ENCODE measurements at regions of chr6 and their contacts with region 1.

Region 1: GRCh38 chr6:143427109-143427817 is 23.2 kb downstream of the ADAT2 start:
- DNase-seq: peak; percentile 79
- H3K4me3 ChIP-seq: peak overlapping the region in 1 of 2 experiments; percentile 51; a peak in 1 of 4 replicates
- H3K27ac ChIP-seq: no peak overlapping the region
- H3K4me1 ChIP-seq: no peaks in the 10 kb centered on the region
- H3K27me3 ChIP-seq: no peaks in the 10 kb centered on the region
- CTCF ChIP-seq: peak; percentile 96
- EP300 ChIP-seq: no peak
- RAD21 ChIP-seq: peak; percentile 99

Region 2: DNA sequence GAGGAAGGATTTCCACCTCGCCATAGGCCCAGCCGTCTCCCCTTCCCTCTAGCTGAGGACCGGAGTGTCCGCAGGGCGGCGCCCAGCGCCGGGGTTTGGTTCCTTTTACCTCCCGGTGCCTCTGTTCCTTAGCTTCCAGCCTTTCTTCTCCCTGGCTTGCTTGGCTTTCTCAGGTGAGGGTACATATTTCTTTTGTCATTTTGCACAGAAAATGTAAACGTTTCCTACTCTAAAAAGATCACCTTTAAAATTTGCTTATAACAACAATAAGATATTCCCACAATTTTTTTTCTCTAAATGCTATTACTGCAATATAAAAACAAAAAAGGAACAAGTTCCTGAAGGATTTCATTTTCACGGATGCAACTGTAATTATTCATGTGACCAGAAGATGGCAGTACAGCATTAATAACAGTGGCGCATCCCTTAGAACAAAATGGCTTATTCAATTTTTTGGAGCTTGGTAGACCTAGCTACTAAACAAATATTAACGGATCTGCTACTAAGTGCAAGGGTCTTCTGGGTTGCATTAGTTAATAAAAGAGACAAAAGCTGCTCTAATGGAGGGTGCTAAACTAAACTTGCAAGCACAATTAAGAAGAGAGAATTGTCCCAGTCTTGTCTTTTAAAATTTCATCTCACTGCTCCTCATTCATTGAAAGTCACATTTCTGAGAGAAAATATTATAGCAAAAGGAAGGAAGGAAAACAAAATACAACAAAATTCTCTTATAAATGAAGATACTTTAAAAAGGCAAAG is 952.6 kb before region 1 on chr6:
- CTCF ChIA-PET with region 1: interaction called, 55 read pairs
- POLR2A ChIA-PET with region 1: no interaction called
- DNase-seq: peak; percentile 47
- H3K4me3 ChIP-seq: peak overlapping the region; percentile 12 to 37; a peak in 2 of 4 replicates
- H3K27ac ChIP-seq: peak overlapping the region; percentile 19 to 66; a peak in 3 of 4 replicates
- H3K4me1 ChIP-seq: peaks cover 0 to 2% of the 10 kb centered on the region in 2 experiments; a peak in 2 of 4 replicates
- H3K27me3 ChIP-seq: no peaks in the 10 kb centered on the region
- CTCF ChIP-seq: peak; percentile 76
- EP300 ChIP-seq: no peak
- RAD21 ChIP-seq: peak; percentile 90

Region 3: DNA sequence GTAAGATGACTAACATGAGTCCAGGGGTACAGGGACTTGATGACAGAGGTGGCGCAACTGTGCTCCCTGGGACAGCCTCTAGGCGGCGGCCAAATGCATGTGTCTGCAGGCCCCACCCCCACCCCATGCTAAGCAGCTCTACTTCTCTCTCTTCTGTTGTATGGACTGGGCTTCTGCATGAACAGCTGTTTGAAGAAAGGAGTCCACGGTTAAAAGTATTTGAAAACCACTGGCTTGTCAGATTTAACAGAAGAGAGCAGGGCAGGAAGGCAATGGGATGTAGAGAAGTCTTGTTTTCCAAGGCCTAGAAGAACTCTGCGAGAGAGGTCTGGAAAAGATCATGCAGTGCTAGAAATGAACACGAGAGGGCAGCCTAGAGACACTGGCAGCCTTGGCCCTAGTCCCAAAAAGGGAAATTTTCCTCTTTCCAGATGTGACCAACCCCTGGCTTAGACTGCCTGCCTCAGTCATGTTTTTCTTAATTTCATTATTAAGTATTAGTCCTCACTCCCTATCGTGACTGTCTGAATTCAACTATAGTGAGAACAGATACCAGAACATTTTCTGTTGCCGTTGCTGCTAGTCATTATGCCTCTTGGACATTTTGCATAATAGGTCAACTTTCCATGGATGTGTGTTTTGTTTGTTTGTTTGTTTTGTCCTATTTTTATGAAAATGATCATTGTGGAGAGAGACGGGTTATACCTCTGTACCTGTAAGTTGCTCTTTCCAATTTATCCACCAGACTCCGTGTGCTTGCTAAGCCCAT is 860.5 kb before region 1 on chr6:
- CTCF ChIA-PET with region 1: interaction called, 21 read pairs
- POLR2A ChIA-PET with region 1: no interaction called
- DNase-seq: peak; percentile 66
- H3K4me3 ChIP-seq: peak overlapping the region in 1 of 2 experiments; percentile 31; a peak in 1 of 4 replicates
- H3K27ac ChIP-seq: peak overlapping the region in 1 of 2 experiments; percentile 45; a peak in 2 of 4 replicates
- H3K4me1 ChIP-seq: peaks cover 0 to 23% of the 10 kb centered on the region in 2 experiments; a peak in 3 of 4 replicates
- H3K27me3 ChIP-seq: no peaks in the 10 kb centered on the region
- CTCF ChIP-seq: peak; percentile 84
- EP300 ChIP-seq: no peak
- RAD21 ChIP-seq: peak; percentile 83

Region 4: DNA sequence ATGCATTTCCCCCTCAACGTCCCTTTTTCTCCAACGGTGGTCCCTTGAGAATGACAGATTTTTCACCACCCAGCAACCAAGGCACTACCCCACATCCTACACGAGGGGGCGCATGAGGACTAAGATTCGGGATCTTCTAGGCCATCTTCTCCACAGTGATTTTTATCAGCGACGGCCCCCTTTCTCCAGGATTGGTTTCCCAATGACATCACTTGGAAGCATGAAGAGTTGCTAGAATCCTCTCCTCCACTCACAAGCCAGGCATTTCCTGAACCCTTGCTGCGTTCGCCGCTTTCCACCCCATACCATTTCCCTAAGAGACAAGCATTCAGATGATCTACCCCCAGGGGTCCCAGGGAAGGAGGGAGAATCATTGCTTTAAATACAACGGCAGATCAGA is 734.3 kb before region 1 on chr6:
- CTCF ChIA-PET with region 1: interaction called, 63 read pairs
- POLR2A ChIA-PET with region 1: interaction called, 3 read pairs
- DNase-seq: peak; percentile 61
- H3K4me3 ChIP-seq: no peak overlapping the region; a peak in 1 of 4 replicates
- H3K27ac ChIP-seq: peak overlapping the region; percentile 53 to 60; a peak in 3 of 4 replicates
- H3K4me1 ChIP-seq: peaks cover 0 to 22% of the 10 kb centered on the region in 2 experiments; a peak in 2 of 4 replicates
- H3K27me3 ChIP-seq: no peaks in the 10 kb centered on the region
- CTCF ChIP-seq: peak; percentile 89
- EP300 ChIP-seq: no peak
- RAD21 ChIP-seq: peak; percentile 98

Region 5: DNA sequence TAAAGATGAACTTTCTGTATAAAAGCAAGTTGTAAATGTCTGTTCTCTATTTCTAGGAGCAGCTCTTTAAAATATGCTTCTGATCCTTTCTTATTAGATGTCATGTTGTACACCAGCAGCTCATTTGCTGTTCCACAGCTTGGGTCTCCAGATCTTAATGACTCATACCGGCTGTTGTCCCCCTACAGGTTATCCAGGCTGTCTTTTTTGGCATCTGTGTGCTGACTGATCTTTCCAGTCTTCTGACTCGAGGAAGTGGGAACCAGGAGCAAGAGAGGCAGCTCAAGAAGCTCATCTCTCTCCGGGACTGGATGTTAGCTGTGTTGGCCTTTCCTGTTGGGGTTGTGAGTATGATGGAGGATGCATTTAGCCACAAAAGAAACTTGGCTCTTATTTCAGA is 290.6 kb before region 1 on chr6:
- CTCF ChIA-PET with region 1: no interaction called
- POLR2A ChIA-PET with region 1: no interaction called
- DNase-seq: no peak
- H3K4me3 ChIP-seq: no peak overlapping the region
- H3K27ac ChIP-seq: no peak overlapping the region
- H3K4me1 ChIP-seq: peaks cover 0 to 5% of the 10 kb centered on the region in 2 experiments; a peak in 1 of 4 replicates
- H3K27me3 ChIP-seq: no peaks in the 10 kb centered on the region
- CTCF ChIP-seq: no peak
- EP300 ChIP-seq: no peak
- RAD21 ChIP-seq: no peak

Region 6: DNA sequence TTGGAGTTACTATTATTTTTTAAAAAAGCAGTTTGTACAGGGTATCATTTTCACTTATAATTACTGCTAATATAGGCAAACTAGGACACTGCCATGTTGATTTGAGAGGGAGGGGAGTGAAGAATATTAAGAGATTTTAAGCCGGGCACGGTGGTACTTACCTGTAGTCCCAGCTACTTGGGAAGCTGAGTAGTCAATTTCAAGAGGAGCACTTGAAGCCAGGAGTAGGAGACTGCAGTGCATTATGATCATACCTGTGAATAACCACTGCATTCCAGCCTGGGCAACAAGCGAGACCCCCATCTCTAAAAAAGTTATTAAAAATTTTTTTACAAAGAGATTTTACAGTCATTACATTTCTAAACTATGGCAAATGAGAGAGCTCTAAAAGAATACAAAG is 12.5 kb before region 1 on chr6:
- CTCF ChIA-PET with region 1: interaction called, 19 read pairs
- POLR2A ChIA-PET with region 1: no interaction called
- DNase-seq: no peak
- H3K4me3 ChIP-seq: no peak overlapping the region
- H3K27ac ChIP-seq: no peak overlapping the region
- H3K4me1 ChIP-seq: no peaks in the 10 kb centered on the region
- H3K27me3 ChIP-seq: no peaks in the 10 kb centered on the region
- CTCF ChIP-seq: no peak
- EP300 ChIP-seq: no peak
- RAD21 ChIP-seq: no peak

Region 7: DNA sequence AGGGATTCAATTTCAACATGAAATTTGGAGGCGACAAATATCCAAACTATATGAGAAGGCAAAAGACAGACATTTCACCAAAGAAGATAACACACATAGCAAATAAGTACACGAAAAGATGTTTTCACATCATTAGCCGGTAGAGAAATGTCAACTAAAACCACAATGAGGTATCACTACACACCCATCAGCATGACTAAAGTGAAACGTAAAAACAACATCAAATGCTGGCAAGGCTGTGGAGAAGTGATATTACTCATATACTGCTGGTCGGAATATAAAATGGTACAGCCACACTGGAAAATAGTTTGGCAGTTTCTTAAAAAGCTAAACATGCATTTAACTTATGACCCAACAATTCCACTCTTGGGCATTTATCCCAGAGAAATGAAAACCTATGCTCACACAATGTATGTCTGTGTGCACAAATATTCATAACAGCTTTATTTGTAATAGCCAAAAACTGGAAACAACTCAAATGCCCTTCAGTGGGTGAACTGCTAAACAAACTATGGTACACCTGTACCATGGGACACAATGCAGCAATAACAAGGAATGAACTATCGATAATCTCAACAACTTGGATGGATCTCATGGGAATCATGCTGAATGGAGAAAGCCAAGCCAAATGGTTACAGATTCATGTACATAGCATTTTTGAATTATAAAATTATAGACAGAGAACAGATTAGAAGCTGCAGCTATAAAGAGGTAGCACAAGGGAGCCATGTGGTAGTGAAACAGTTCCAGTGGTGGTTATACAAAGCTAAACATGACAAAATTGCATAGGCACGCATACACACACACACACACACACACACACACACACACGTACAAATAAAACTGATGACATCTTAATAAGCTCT is 14.7 kb after region 1 on chr6:
- CTCF ChIA-PET with region 1: interaction called, 12 read pairs
- POLR2A ChIA-PET with region 1: no interaction called
- DNase-seq: no peak
- H3K4me3 ChIP-seq: no peak overlapping the region
- H3K27ac ChIP-seq: no peak overlapping the region
- H3K4me1 ChIP-seq: no peaks in the 10 kb centered on the region
- H3K27me3 ChIP-seq: no peaks in the 10 kb centered on the region
- CTCF ChIP-seq: no peak
- EP300 ChIP-seq: no peak
- RAD21 ChIP-seq: no peak

Region 8: GRCh38 chr6:143510991-143511891 is 84.0 kb after region 1 on chr6 and contains the start of gene FUCA2:
- CTCF ChIA-PET with region 1: no interaction called
- POLR2A ChIA-PET with region 1: no interaction called
- DNase-seq: peak; percentile 86
- H3K4me3 ChIP-seq: peak within 1 kb of the TSS; percentile 59 to 67
- H3K27ac ChIP-seq: peak within 1 kb of the TSS; percentile 53 to 82
- H3K4me1 ChIP-seq: peaks cover 0 to 13% of the 10 kb centered on the region in 2 experiments; a peak in 2 of 4 replicates
- H3K27me3 ChIP-seq: no peaks in the 10 kb centered on the region
- CTCF ChIP-seq: no peak
- EP300 ChIP-seq: no peak
- RAD21 ChIP-seq: 0 out of 2 replicates have a peak, but pooled peaks have one; percentile 11
- polyA plus RNA-seq, gene FUCA2: 37.6 and 41.0 TPM in 2 replicates

Region 9: DNA sequence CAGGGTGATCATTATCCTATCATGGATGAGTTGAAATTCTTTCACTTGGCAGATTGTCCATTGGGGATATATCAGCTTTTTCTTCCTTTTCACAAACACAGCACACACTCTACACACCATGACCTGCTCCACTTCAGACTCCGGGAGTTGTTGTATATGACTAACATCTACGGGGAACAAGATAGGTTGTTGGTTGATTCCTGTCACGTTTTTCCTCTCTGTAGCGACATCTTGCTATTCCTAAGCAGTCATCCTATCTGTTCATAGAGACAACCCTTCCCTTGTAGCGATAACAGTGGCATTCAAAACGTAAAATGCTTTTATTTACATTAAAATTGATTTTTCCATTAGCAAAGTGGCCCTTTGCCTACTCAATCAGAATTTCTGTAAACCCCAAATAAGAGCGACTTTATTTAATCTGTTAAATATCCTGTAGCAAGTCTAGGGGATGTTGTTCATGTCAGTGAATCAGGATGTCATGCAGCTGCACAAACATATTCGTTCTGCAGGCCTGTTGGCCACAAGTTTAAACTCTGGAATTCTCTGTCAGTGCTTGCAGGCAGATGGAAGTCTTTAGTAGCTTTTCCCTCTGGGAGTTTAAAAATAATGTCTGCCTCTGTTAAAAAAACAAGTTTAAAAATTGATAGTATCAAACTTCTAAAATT is 273.6 kb after region 1 on chr6:
- CTCF ChIA-PET with region 1: no interaction called
- POLR2A ChIA-PET with region 1: no interaction called
- DNase-seq: peak; percentile 32
- H3K4me3 ChIP-seq: no peak overlapping the region
- H3K27ac ChIP-seq: peak overlapping the region; percentile 44 to 50; a peak in 2 of 4 replicates
- H3K4me1 ChIP-seq: peaks cover 6 to 16% of the 10 kb centered on the region in 2 experiments; a peak in 1 of 4 replicates
- H3K27me3 ChIP-seq: no peaks in the 10 kb centered on the region
- CTCF ChIP-seq: no peak
- EP300 ChIP-seq: no peak
- RAD21 ChIP-seq: no peak